Activated CD4-positive, alpha-beta memory T cell treated with anti-CD3 and anti-CD28 coated beads for 36 hours (primary cell): ENCODE measurements at regions of chr7 and their contacts with region 1.

Region 1: GRCh38 chr7:100221231-100221718 is 1.5 kb downstream of the PVRIG start:
- DNase-seq: peak; percentile 90
- H3K4me3 Mint-ChIP-seq: peak overlapping the region; percentile 92
- H3K27ac Mint-ChIP-seq: peak overlapping the region; percentile 98
- H3K4me1 Mint-ChIP-seq: peaks cover 56% of the 10 kb centered on the region
- H3K27me3 Mint-ChIP-seq: no peaks in the 10 kb centered on the region

Region 2: DNA sequence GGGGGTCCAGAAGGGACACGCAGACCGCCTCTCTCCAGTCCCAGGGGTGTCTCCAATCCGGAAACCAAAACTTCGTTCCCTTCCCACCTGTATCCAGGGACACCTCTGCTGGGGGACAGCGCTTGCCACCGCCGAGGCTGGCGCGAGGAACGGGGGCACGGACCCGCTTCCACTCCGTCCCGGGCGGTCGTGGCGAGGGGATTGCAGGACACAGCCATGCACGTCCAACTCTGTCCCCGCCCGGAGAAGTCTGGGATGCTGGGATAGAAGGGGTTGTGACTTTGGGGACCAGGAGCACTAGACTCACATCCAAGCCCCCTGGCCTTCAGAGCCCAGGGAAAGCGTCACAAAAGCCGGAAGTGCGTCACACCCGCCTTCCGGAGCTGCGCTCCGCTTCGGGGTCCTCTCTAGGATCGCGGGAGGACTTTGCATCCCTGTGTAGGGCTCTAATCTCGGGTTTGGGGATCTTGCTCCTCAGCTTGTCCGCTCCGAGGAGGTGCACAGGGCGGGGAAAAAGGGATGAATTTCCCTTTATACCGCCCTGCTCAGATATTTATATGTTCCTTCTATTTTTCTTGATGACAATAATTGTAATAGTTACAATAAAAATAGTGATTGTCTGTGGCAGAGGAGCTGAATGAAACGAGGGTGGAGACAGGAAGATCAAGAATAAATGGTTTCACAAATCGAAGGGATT is 669.4 kb before region 1 on chr7 and contains the start of gene FAM200A:
- CTCF ChIA-PET with region 1: no interaction called
- POLR2A ChIA-PET with region 1: no interaction called
- intact Hi-C with region 1: no loop called
- DNase-seq: peak; percentile 89
- H3K4me3 Mint-ChIP-seq: peak within 1 kb of the TSS; percentile 91
- H3K27ac Mint-ChIP-seq: peak within 1 kb of the TSS; percentile 71
- H3K4me1 Mint-ChIP-seq: peaks cover 26% of the 10 kb centered on the region
- H3K27me3 Mint-ChIP-seq: no peaks in the 10 kb centered on the region
- total RNA-seq, gene FAM200A: 4.0 to 4.8 TPM

Region 3: GRCh38 chr7:99918959-99919813 is 302.1 kb before region 1 on chr7 and contains the start of gene TRIM4:
- CTCF ChIA-PET with region 1: no interaction called
- POLR2A ChIA-PET with region 1: no interaction called
- intact Hi-C with region 1: loop called (anchors 10 kb)
- DNase-seq: peak; percentile 96
- H3K4me3 Mint-ChIP-seq: peak within 1 kb of the TSS; percentile 98
- H3K27ac Mint-ChIP-seq: peak within 1 kb of the TSS; percentile 98
- H3K4me1 Mint-ChIP-seq: peaks cover 43% of the 10 kb centered on the region
- H3K27me3 Mint-ChIP-seq: no peaks in the 10 kb centered on the region
- total RNA-seq, gene TRIM4: 24.9 to 26.1 TPM

Region 4: DNA sequence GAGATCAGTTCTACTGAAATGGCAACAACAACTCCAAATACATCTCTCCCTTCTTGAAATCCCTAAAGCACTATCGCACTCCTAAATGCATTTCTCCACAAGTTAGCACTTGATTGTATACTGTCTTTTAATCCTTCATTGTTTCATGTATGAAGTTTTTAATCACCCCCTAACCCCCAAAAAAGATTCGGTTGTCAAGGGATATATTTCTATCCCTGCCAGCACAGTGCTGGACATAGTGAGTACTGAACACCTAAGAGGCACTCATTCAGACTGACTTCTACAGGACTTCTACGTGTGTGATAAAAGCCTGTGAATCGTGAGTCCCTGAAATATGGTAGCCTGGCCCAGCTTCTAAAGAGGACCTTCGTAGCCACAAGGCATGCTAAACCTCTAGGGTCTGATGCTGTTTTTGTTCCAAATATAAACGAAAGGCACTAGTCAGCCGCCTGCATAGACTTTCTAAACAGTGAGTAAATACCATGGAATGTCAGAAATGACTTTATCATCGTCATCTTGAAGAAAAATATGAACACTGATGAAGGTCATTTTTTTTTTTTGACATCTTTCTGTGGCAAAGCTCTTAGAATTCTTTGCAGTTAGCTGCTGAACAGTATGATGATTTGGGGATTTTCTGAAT is 186.3 kb before region 1 on chr7:
- CTCF ChIA-PET with region 1: no interaction called
- POLR2A ChIA-PET with region 1: no interaction called
- intact Hi-C with region 1: no loop called
- DNase-seq: no peak
- H3K4me3 Mint-ChIP-seq: no peak overlapping the region
- H3K27ac Mint-ChIP-seq: no peak overlapping the region
- H3K4me1 Mint-ChIP-seq: no peaks in the 10 kb centered on the region
- H3K27me3 Mint-ChIP-seq: no peaks in the 10 kb centered on the region

Region 5: DNA sequence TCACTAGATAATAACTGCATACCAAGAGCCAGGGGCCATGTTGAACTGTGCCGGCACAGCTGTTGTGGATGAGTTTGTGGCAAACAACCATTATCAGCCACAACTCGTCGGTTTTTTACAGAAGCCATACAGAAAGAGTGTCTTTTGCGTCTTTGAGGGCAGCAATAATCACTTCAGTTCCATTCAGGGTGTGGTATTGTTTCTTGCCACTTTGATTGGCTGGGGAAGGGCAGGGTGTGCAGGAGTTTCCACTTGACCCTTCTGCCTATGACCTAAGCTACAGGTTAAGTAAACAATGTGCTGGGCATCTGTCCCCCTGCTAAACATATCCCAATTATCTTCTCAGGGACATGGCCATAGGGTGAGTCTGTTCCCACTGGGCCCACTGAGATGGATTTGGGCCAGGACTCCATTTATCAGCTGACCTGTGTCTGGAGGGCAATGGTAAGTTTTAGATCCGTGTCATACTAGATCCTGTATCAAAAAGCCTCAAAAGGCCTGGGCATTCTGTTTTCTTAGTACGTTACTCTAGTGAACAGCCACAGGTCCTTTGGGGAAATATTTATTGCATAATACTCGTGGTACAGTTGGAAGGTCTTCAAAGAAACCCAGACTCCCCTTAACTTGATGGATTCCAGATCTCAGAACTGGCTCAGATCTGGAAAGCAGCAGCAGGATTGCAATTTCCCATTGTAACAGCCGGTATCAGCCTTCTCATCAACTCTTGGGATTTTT is 155.7 kb before region 1 on chr7:
- CTCF ChIA-PET with region 1: no interaction called
- POLR2A ChIA-PET with region 1: no interaction called
- intact Hi-C with region 1: no loop called
- DNase-seq: no peak
- H3K4me3 Mint-ChIP-seq: no peak overlapping the region
- H3K27ac Mint-ChIP-seq: no peak overlapping the region
- H3K4me1 Mint-ChIP-seq: no peaks in the 10 kb centered on the region
- H3K27me3 Mint-ChIP-seq: no peaks in the 10 kb centered on the region

Region 6: DNA sequence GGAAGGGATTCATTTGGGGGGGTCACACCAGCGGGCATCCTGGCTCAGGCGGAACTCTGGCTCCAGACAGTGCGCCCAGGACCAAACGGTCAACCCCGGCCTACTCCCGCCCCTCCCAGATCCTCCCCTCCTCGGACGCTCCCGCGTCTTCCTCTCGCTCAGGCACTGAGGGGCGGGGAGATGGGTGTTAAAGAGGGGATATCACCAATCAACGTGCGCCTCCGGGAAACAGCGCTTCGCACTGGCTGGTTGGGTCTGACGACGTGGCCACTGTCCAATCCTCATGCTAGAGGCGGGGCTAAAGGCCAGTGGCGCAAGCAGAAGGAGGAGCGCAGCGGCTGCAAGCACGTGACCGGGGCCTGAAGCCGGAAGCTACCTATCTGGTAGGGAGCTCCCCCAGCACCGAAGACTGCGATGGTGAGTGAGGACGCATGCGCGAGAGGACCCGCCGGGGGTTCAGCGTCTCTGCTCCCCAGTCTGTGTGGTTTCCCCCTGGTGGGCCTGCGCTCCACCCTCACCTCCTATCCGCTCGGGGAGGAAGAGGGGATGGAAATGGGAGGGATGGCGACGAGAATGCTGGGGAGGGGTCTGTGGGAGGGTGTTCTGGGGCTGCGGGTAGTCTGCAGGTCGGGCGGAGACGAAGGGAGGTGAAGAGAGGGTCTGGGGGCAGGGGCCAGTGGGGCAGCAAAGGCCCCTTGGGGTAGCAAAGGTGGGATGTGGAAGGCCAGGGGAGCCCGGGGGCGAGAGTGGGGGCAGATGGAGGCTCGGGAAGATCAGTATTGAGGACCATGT is 72.5 kb before region 1 on chr7 and contains the start of gene LAMTOR4:
- CTCF ChIA-PET with region 1: interaction called, 9 read pairs
- POLR2A ChIA-PET with region 1: interaction called, 3 read pairs
- intact Hi-C with region 1: loop called (anchors 2 kb)
- DNase-seq: peak; percentile 99
- H3K4me3 Mint-ChIP-seq: peak within 1 kb of the TSS; percentile 95
- H3K27ac Mint-ChIP-seq: peak within 1 kb of the TSS; percentile 94
- H3K4me1 Mint-ChIP-seq: peaks cover 25% of the 10 kb centered on the region
- H3K27me3 Mint-ChIP-seq: no peaks in the 10 kb centered on the region
- total RNA-seq, gene LAMTOR4: 136 to 151 TPM

Region 7: DNA sequence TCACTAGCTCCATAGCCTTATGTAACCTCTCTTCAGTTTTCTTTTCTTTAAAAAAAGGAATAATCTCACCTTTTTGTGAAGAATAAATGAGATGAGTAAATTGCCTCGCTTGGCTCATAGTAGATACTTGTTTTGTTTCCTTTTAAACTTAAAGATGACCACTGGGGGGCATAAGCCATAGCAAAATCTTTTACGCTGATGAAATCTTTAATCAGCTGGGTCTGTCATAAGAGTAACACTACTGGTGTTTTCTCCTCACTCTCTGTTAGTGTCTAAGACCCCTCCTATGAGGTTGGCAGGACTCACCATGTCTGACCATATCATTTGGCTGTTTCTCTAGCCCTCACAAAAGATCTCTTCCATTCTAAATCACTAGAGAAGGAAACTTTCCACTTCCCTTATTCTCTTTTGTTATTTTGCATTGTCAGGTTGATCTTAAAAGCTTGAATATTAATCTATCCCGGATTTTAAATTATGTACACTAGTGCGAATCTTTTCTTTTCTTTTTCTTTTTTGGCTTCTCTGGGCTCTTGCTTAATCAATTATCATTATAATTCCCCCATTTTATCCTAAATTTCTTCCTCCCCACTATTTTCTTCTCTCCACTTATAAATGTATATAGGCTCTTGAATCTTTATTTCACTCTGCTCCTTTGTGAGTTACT is 31.1 kb before region 1 on chr7:
- CTCF ChIA-PET with region 1: interaction called, 21 read pairs
- POLR2A ChIA-PET with region 1: no interaction called
- intact Hi-C with region 1: loop called (anchors 1 kb)
- DNase-seq: no peak
- H3K4me3 Mint-ChIP-seq: no peak overlapping the region
- H3K27ac Mint-ChIP-seq: no peak overlapping the region
- H3K4me1 Mint-ChIP-seq: peaks cover 18% of the 10 kb centered on the region
- H3K27me3 Mint-ChIP-seq: no peaks in the 10 kb centered on the region

Region 8: DNA sequence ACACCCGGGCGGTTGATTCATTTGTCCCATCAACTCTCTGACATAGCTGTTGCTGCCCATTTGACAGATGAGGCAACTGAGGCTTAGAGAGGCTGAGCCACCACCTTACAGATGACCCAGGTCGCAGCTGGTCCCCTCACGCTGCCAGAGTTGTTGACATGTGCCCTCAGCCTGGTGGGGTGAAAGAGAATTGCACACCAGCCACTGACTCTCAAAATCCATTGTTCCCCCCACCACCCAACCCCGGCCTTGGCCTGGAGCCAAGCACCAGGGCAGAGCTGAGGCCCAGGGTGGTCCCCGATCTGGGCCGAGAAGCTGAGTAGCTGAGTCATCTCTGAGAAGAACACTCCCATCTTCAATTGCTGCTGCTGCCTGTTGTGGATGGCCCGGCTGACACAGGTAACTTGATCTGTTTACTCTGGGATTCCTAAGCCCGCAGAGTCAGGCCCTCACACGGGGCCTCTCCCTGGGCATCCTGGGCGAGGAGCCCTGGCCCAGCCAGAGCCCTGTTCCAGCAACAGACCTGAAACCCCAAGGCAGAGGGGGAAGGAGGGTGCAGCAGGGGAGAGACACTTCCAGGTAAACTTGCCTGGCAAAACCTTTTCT is 26.0 kb after region 1 on chr7:
- CTCF ChIA-PET with region 1: no interaction called
- POLR2A ChIA-PET with region 1: interaction called, 4 read pairs
- intact Hi-C with region 1: loop called (anchors 1 kb)
- DNase-seq: no peak
- H3K4me3 Mint-ChIP-seq: no peak overlapping the region
- H3K27ac Mint-ChIP-seq: no peak overlapping the region
- H3K4me1 Mint-ChIP-seq: peaks cover 21% of the 10 kb centered on the region
- H3K27me3 Mint-ChIP-seq: no peaks in the 10 kb centered on the region

Region 9: DNA sequence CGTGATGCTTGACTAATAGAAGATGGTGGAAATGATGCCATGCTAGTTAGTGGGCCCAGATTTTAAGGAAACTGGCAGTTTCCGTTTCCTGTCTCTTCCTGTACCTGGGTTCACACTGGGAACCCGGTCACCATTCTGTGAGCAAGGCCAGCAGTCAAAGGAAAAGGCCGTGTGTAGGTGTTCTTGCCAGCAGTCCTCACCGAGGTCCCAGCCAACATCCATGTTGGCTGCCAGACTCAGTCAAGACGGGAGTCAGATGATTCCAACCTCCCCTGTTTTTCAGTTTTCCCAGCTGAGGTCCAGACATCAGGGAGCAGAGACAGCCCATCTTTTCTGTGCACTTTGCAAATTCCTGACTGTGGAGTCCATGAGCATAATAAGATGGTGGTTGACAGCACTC is 121.5 kb after region 1 on chr7:
- CTCF ChIA-PET with region 1: interaction called, 4 read pairs
- POLR2A ChIA-PET with region 1: no interaction called
- intact Hi-C with region 1: loop called (anchors 5 kb)
- DNase-seq: no peak
- H3K4me3 Mint-ChIP-seq: no peak overlapping the region
- H3K27ac Mint-ChIP-seq: peak overlapping the region; percentile 64
- H3K4me1 Mint-ChIP-seq: peaks cover 41% of the 10 kb centered on the region
- H3K27me3 Mint-ChIP-seq: no peaks in the 10 kb centered on the region